HepG2 (cell line): ENCODE measurements at regions of chr10 and their contacts with region 1.

Region 1: GRCh38 chr10:112314822-112315474 is 31.7 kb downstream of the TECTB start:
- DNase-seq: peak; percentile 64
- ATAC-seq: peak; percentile 95
- H3K4me3 ChIP-seq: no peak overlapping the region
- H3K27ac ChIP-seq: no peak overlapping the region
- H3K4me1 ChIP-seq: peaks cover 47% of the 10 kb centered on the region
- H3K27me3 ChIP-seq: no peaks in the 10 kb centered on the region
- CTCF ChIP-seq: peak; percentile 92
- EP300 ChIP-seq: no peak
- POLR2A ChIP-seq: no peak
- RAD21 ChIP-seq: peak; percentile 94

Region 2: GRCh38 chr10:111076191-111076681 is 1238.7 kb before region 1 on chr10:
- CTCF ChIA-PET with region 1: no interaction called
- POLR2A ChIA-PET with region 1: no interaction called
- in situ Hi-C with region 1: loop called (anchors 25 kb)
- intact Hi-C with region 1: no loop called
- DNase-seq: no peak
- ATAC-seq: peak; percentile 93
- H3K4me3 ChIP-seq: peak overlapping the region; percentile 12 to 70 (median 47); a peak in 5 of 6 replicates
- H3K27ac ChIP-seq: no peak overlapping the region
- H3K4me1 ChIP-seq: no peaks in the 10 kb centered on the region
- H3K27me3 ChIP-seq: peaks cover 7 to 26% of the 10 kb centered on the region in 2 experiments
- CTCF ChIP-seq: peak; percentile 93
- EP300 ChIP-seq: no peak
- POLR2A ChIP-seq: no peak
- RAD21 ChIP-seq: peak; percentile 87

Region 3: GRCh38 chr10:111756217-111757061 is 558.5 kb before region 1 on chr10:
- CTCF ChIA-PET with region 1: no interaction called
- POLR2A ChIA-PET with region 1: no interaction called
- in situ Hi-C with region 1: loop called (anchors 5 kb)
- intact Hi-C with region 1: loop called (anchors 2 kb)
- DNase-seq: peak; percentile 46
- ATAC-seq: peak; percentile 98
- H3K4me3 ChIP-seq: no peak overlapping the region; a peak in 1 of 6 replicates
- H3K27ac ChIP-seq: no peak overlapping the region
- H3K4me1 ChIP-seq: peaks cover 10% of the 10 kb centered on the region
- H3K27me3 ChIP-seq: no peaks in the 10 kb centered on the region
- CTCF ChIP-seq: peak; percentile 82
- EP300 ChIP-seq: no peak
- POLR2A ChIP-seq: no peak
- RAD21 ChIP-seq: peak; percentile 37; the same call in 1 of the 2 replicates

Region 4: DNA sequence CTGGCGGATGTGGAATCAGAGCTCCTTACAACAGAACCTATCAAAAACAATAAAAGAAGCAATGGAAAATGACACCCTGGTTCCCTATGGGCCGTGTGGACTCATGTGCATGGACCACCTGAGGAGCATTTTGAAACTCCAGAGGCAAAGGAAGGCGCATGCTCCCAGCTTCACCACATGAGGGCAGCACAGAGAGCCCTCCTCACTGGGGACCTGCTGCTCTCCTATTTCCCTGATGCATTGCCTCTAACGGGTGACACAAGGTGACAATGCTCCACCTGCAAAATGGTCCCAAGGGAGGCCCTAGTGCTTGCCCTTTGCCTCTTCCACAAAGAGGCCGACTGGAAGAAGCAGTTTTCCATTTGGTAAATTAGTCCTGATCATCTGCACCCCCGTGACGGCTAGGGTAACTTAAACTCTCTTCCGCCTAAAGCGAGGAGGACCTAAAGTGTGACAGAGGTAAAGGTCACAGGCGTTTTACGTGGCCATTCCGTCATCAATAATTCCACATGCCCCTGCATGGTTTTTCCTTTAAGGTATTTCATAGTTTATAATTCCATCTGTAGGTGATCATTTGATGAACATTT is 199.1 kb before region 1 on chr10:
- CTCF ChIA-PET with region 1: interaction called, 12 read pairs
- POLR2A ChIA-PET with region 1: no interaction called
- in situ Hi-C with region 1: no loop called
- intact Hi-C with region 1: loop called (anchors 1 kb)
- DNase-seq: peak; percentile 55
- ATAC-seq: peak; percentile 92
- H3K4me3 ChIP-seq: no peak overlapping the region
- H3K27ac ChIP-seq: no peak overlapping the region
- H3K4me1 ChIP-seq: no peaks in the 10 kb centered on the region
- H3K27me3 ChIP-seq: no peaks in the 10 kb centered on the region
- CTCF ChIP-seq: peak; percentile 85
- EP300 ChIP-seq: no peak
- POLR2A ChIP-seq: no peak
- RAD21 ChIP-seq: peak; percentile 47; the same call in 1 of the 2 replicates

Region 5: DNA sequence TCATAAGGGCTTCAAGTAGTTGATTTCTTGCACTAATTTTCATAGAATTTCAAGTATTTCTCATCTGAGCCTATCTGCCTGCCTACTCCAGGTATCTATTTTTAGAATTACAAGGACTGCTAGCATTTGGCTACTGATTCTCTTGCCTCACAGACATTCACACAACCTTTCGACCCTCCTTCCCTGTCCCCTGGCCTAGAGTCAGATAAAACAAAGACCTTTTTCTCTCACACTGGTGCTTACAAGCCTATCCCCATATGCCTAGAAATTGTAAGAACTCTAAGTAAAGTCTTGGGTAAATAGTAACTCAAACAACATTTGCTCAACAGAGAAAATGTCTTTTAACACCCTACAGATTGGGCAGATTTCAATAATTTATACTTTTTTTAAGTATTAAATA is 137.7 kb before region 1 on chr10:
- CTCF ChIA-PET with region 1: no interaction called
- POLR2A ChIA-PET with region 1: no interaction called
- in situ Hi-C with region 1: no loop called
- intact Hi-C with region 1: loop called (anchors 2 kb)
- DNase-seq: peak; percentile 92
- ATAC-seq: peak; percentile 96
- H3K4me3 ChIP-seq: no peak overlapping the region
- H3K27ac ChIP-seq: peak overlapping the region; percentile 69
- H3K4me1 ChIP-seq: peaks cover 59% of the 10 kb centered on the region
- H3K27me3 ChIP-seq: no peaks in the 10 kb centered on the region
- CTCF ChIP-seq: no peak
- EP300 ChIP-seq: peak in 1 of 2 experiments; percentile 57; a peak in 2 of 4 replicates
- POLR2A ChIP-seq: no peak
- RAD21 ChIP-seq: no peak

Region 6: DNA sequence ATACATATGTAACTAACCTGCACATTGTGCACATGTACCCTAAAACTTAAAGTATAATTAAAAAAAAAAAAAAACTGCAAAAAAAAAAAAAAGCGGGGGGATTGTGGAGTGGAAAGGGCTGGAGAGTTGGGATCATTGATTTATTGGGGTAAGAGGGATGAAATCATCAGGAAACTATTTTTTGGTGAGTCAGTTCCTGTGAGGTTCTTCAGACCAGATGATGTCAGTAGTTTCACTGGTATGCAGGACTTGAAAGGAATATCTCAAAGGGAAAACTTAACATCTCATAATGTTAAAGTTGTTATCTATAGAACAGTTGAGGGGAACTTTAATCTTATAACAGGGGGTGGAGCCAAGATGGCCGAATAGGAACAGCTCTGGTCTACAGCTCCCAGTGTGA is 64.4 kb before region 1 on chr10:
- CTCF ChIA-PET with region 1: no interaction called
- POLR2A ChIA-PET with region 1: no interaction called
- in situ Hi-C with region 1: no loop called
- intact Hi-C with region 1: no loop called
- DNase-seq: no peak
- ATAC-seq: no peak
- H3K4me3 ChIP-seq: no peak overlapping the region
- H3K27ac ChIP-seq: no peak overlapping the region
- H3K4me1 ChIP-seq: no peaks in the 10 kb centered on the region
- H3K27me3 ChIP-seq: no peaks in the 10 kb centered on the region
- CTCF ChIP-seq: no peak
- EP300 ChIP-seq: no peak
- POLR2A ChIP-seq: no peak
- RAD21 ChIP-seq: no peak

Region 7: GRCh38 chr10:112565434-112566053 is 250.6 kb after region 1 on chr10:
- CTCF ChIA-PET with region 1: no interaction called
- POLR2A ChIA-PET with region 1: no interaction called
- in situ Hi-C with region 1: no loop called
- intact Hi-C with region 1: no loop called
- DNase-seq: peak; percentile 79
- ATAC-seq: peak; percentile 41; the same call in 1 of the 3 replicates
- H3K4me3 ChIP-seq: no peak overlapping the region
- H3K27ac ChIP-seq: no peak overlapping the region
- H3K4me1 ChIP-seq: peaks cover 49% of the 10 kb centered on the region
- H3K27me3 ChIP-seq: no peaks in the 10 kb centered on the region
- CTCF ChIP-seq: peak; percentile 78
- EP300 ChIP-seq: peak in 1 of 2 experiments; percentile 18; a peak in 1 of 4 replicates
- POLR2A ChIP-seq: no peak
- RAD21 ChIP-seq: peak; percentile 70; the same call in 1 of the 2 replicates